CD4-positive, alpha-beta T cell (primary cell): ENCODE measurements at regions of chr1 and their contacts with region 1.

Region 1: GRCh38 chr1:171530676-171531075 is 45.3 kb downstream of the PRRC2C start:
- DNase-seq: no peak
- ATAC-seq: no peak
- H3K4me3 ChIP-seq: no peak overlapping the region
- H3K4me3 Mint-ChIP-seq: no peak overlapping the region
- H3K27ac ChIP-seq: no peak overlapping the region
- H3K27ac Mint-ChIP-seq: no peak overlapping the region
- H3K4me1 ChIP-seq: no peaks in the 10 kb centered on the region
- H3K4me1 Mint-ChIP-seq: no peaks in the 10 kb centered on the region
- H3K27me3 ChIP-seq: no peaks in the 10 kb centered on the region
- H3K27me3 Mint-ChIP-seq: no peaks in the 10 kb centered on the region
- CTCF ChIP-seq: no peak

Region 2: GRCh38 chr1:171563675-171564074 is 33.0 kb after region 1 on chr1:
- CTCF ChIA-PET with region 1: no interaction called
- POLR2A ChIA-PET with region 1: interaction called, 3 read pairs
- intact Hi-C with region 1: loop called in 1 of 2 experiments (anchors 5 kb)
- DNase-seq: no peak
- ATAC-seq: no peak
- H3K4me3 ChIP-seq: no peak overlapping the region
- H3K4me3 Mint-ChIP-seq: no peak overlapping the region
- H3K27ac ChIP-seq: no peak overlapping the region
- H3K27ac Mint-ChIP-seq: no peak overlapping the region
- H3K4me1 ChIP-seq: no peaks in the 10 kb centered on the region
- H3K4me1 Mint-ChIP-seq: peaks cover 3% of the 10 kb centered on the region
- H3K27me3 ChIP-seq: no peaks in the 10 kb centered on the region
- H3K27me3 Mint-ChIP-seq: no peaks in the 10 kb centered on the region
- CTCF ChIP-seq: no peak

Region 3: GRCh38 chr1:171583581-171584201 is 53.0 kb after region 1 on chr1:
- CTCF ChIA-PET with region 1: no interaction called
- POLR2A ChIA-PET with region 1: no interaction called
- intact Hi-C with region 1: loop called in 1 of 2 experiments (anchors 5 kb)
- DNase-seq: no peak
- ATAC-seq: no peak
- H3K4me3 ChIP-seq: no peak overlapping the region
- H3K4me3 Mint-ChIP-seq: no peak overlapping the region
- H3K27ac ChIP-seq: no peak overlapping the region
- H3K27ac Mint-ChIP-seq: no peak overlapping the region
- H3K4me1 ChIP-seq: no peaks in the 10 kb centered on the region
- H3K4me1 Mint-ChIP-seq: peaks cover 9% of the 10 kb centered on the region
- H3K27me3 ChIP-seq: no peaks in the 10 kb centered on the region
- H3K27me3 Mint-ChIP-seq: no peaks in the 10 kb centered on the region
- CTCF ChIP-seq: no peak

Region 4: GRCh38 chr1:172507741-172508140 is 977.1 kb after region 1 on chr1:
- CTCF ChIA-PET with region 1: no interaction called
- POLR2A ChIA-PET with region 1: no interaction called
- intact Hi-C with region 1: no loop called
- DNase-seq: no peak
- ATAC-seq: no peak
- H3K4me3 ChIP-seq: no peak overlapping the region
- H3K4me3 Mint-ChIP-seq: no peak overlapping the region
- H3K27ac ChIP-seq: no peak overlapping the region
- H3K27ac Mint-ChIP-seq: no peak overlapping the region
- H3K4me1 ChIP-seq: no peaks in the 10 kb centered on the region
- H3K4me1 Mint-ChIP-seq: no peaks in the 10 kb centered on the region
- H3K27me3 ChIP-seq: no peaks in the 10 kb centered on the region
- H3K27me3 Mint-ChIP-seq: no peaks in the 10 kb centered on the region
- CTCF ChIP-seq: no peak